Activated CD4-positive, alpha-beta memory T cell treated with anti-CD3 and anti-CD28 coated beads, Interleukin-2, amount 10 ng/mL, durations not matched to agents 7 days and 5 days (primary cell): ENCODE measurements at regions of chr6 and their contacts with region 1.

Region 1: DNA sequence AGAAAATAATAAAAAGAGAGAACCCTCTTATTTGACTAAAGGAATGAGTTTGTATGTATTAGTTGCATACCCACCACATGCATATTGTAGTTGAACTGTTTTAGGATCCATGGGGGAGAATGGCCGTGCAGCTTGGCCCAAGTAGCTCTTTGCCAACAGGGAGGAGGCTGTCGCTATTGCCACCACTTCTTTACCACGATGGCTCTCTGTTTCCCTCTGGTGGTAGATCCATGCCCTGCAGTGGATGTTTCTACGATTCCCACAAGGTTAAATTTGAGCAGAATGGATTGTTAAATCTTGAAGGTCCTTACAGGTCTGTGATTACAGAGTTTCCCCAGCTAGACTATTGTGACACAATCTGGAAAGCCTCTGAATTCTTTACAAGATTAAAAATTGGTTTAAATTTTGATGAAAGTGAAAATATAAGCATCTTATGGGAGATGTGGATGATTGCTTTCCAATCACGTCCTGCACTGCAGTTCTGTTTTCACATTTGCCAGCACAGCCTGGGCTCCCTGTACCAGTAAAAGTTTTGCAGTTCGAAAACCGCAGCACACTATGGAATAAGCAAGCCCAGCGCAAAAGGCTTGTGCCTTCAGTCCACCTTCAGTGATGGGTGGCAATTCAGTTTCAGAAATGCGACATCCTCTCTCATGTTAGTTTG is 34.4 kb upstream of the FNDC1 start:
- DNase-seq: peak; percentile 79
- H3K4me3 Mint-ChIP-seq: no peak overlapping the region
- H3K27ac Mint-ChIP-seq: no peak overlapping the region
- H3K4me1 Mint-ChIP-seq: peaks cover 2% of the 10 kb centered on the region
- H3K27me3 Mint-ChIP-seq: peaks cover 30% of the 10 kb centered on the region

Region 2: DNA sequence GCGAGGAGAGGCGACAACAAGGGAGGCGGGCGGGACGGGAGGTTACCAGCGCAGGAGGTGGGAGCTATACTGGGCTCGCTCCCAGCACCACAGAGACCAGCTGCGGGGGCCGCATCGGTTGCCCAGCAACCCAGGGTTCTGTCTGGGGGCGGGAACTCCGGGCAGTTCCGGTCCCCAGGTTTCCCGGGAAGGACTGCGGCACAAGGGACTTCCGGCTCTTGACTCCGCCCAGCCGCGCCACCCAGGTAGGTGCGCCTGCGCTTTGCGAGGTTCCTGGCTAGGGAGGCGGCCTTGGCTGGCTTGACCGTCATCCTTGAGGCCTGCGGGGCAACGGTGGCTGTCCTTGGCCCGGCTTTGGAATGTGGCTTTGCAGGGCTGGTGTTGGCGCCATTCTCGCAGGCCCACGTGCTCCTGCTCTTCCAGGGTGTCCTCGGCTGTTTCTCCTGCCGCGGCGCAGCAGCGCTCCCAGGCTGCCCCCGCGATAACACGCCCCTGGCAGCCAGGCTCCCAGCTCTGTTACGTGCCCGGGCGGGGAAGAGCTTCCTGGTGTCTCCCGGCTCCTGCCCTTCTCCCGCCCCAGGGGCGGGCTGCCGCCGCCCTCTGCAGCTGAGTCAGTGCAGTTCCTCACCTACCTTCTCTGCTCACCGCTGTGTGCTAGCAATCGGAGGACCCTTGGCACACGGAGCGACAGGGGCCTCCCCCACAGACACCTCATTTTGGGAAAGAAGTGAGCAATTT is 135.0 kb before region 1 on chr6 and contains the start of gene RSPH3:
- CTCF ChIA-PET with region 1: interaction called, 24 read pairs
- POLR2A ChIA-PET with region 1: interaction called, 3 read pairs
- DNase-seq: peak; percentile 92
- H3K4me3 Mint-ChIP-seq: peak within 1 kb of the TSS; percentile 97
- H3K27ac Mint-ChIP-seq: peak within 1 kb of the TSS; percentile 72
- H3K4me1 Mint-ChIP-seq: peaks cover 44% of the 10 kb centered on the region
- H3K27me3 Mint-ChIP-seq: no peaks in the 10 kb centered on the region
- total RNA-seq, gene RSPH3: 3.4 to 3.7 TPM

Region 3: DNA sequence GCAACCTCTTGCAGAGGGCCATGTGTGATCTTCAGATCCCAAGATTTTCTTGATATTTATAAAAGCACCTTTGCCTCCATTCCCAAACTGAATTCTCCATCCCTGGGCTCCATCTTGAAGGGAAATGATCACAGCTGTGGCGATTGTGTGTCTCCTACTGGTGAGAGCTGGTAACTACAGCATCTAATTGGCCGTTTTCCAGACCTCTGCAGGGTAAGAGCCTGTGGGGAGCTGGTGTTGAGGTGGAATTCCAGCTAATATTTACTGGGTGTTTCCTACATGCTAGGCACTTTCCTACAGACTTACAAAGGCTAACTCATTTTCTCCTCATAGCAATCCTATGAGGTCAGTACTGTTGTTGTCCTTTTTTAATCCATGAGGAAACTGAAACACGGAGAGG is 24.8 kb before region 1 on chr6:
- CTCF ChIA-PET with region 1: interaction called, 33 read pairs
- POLR2A ChIA-PET with region 1: interaction called, 5 read pairs
- DNase-seq: peak; percentile 41
- H3K4me3 Mint-ChIP-seq: no peak overlapping the region
- H3K27ac Mint-ChIP-seq: no peak overlapping the region
- H3K4me1 Mint-ChIP-seq: peaks cover 57% of the 10 kb centered on the region
- H3K27me3 Mint-ChIP-seq: no peaks in the 10 kb centered on the region

Region 4: DNA sequence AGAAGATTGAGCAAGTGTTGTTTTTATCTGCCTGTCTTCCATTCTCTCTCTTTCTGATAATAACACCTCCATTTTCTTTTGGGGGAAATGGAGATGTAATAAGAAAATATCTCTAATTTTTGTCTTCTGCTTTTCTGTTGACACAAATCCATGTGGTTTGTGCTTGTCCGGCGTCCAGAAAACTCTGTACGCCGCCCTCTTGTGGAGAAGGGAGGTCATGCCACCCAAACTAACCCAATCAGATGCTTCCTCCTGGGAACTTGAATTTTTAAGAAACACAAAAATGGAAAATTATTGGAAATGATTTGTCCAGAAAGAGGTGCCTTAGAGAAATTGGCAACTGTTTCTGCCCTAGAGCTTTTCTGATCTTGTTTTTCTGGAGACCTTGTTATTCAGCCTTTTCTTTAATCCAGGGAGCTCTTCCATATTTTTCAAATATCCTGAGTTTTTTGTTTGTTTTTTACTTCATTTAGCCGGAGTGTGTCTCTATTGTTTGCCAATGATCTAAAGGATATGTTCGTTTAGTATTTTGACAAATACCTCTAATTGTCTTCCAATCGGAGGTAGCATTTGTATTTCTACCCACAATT is 16.5 kb after region 1 on chr6:
- CTCF ChIA-PET with region 1: interaction called, 27 read pairs
- POLR2A ChIA-PET with region 1: no interaction called
- DNase-seq: peak; percentile 41
- H3K4me3 Mint-ChIP-seq: no peak overlapping the region
- H3K27ac Mint-ChIP-seq: no peak overlapping the region
- H3K4me1 Mint-ChIP-seq: peaks cover 1% of the 10 kb centered on the region
- H3K27me3 Mint-ChIP-seq: peaks cover 37% of the 10 kb centered on the region

Region 5: GRCh38 chr6:159203304-159204005 is 68.6 kb after region 1 on chr6:
- CTCF ChIA-PET with region 1: no interaction called
- POLR2A ChIA-PET with region 1: no interaction called
- DNase-seq: no peak
- H3K4me3 Mint-ChIP-seq: no peak overlapping the region
- H3K27ac Mint-ChIP-seq: no peak overlapping the region
- H3K4me1 Mint-ChIP-seq: peaks cover 2% of the 10 kb centered on the region
- H3K27me3 Mint-ChIP-seq: peaks cover 14% of the 10 kb centered on the region